ENCODE measurements at regions of chrX and their contacts with region 1.

Region 1: DNA sequence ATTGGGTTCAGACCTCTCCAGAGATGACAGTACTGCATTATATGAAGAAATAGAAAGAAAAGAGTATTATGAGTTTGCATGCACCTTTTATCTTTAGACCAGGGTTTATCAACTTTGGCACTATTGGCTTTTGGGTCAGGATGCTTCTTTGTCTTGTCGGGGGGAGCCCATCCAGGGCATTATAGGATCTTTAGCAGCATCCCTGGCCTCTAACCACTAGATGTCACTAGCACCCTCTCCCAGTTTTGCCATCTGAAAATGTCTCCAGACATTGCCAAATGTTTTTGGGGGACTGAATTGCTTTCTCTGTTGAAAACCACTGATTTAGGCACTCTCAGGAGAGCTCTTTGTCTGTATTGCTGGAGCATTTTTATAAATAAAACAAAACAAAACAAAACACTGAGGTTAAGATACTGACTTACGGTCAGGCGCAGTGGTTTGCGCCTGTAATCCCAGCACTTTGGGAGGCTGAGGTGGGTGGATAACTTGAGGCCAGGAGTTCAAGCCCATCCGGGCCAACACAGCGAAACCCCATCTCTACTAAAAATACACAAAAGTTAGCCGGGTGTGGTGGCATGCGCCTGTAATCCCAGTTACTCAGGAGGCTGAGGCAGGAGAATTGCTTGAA is 23.6 kb downstream of the CA5B start:
- H3K4me3 Mint-ChIP-seq: no peak overlapping the region
- H3K27ac Mint-ChIP-seq: no peak overlapping the region
- H3K4me1 Mint-ChIP-seq: peaks cover 6% of the 10 kb centered on the region
- H3K27me3 Mint-ChIP-seq: no peaks in the 10 kb centered on the region

Region 2: DNA sequence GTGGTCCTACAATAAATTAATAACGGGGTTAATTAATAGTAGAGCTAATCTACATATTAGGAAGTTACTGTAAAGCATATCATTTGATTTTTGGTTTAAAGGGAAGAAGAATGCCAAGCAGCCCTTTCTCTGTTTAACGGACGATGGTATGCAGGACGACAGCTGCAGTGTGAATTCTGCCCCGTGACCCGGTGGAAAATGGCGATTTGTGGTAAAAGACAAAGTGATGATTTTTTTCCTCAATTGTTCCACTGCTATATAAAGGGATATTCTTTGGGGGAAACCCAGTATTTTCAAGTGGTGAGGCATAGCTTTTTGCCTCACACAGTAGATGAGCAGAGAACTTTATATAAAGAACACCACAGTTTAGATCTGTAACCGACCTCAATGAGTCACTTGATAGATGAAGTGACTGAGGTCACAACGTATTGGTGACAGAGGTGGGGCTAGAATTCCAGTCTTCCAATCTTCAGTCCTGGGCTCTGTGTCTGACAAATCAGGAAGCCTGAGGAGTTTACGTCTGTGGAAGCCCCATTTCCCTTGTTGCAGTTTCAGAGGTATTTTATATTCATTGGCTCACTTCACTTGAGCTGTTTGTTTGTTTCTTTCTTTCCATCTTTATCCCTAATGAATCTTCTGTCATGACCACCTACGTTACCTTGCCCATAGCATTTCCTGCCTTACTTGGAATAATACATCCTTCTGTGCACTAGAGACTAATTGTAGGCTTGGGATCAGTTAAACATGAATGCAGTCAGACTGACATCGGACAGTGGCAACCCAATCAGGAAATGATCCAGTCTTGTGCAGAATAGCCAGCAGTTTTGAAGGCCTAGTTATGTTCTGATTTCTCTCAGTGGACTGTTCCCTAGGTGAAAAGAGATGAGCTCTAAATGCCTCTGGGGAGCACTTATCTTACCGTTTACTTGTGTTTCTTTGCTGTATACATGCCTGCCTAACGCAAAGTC is 58.7 kb after region 1 on chrX:
- intact Hi-C with region 1: loop called (anchors 10 kb)
- H3K4me3 Mint-ChIP-seq: no peak overlapping the region
- H3K27ac Mint-ChIP-seq: no peak overlapping the region
- H3K4me1 Mint-ChIP-seq: peaks cover 9% of the 10 kb centered on the region
- H3K27me3 Mint-ChIP-seq: no peaks in the 10 kb centered on the region

Measured in dendritic cell treated with granulocyte-macrophage colony-stimulating factor and Interleukin-4, amounts not matched to agents 40 ng/mL and 50 ng/mL, for 4 days (primary cell).